ENCODE measurements at regions of chr5 and their contacts with region 1.

Region 1: GRCh38 chr5:137822158-137822764 is 45.4 kb upstream of the MYOT start:
- DNase-seq: peak; percentile 60
- H3K4me3 ChIP-seq: no peak overlapping the region
- H3K27ac ChIP-seq: no peak overlapping the region
- H3K4me1 ChIP-seq: no peaks in the 10 kb centered on the region
- H3K27me3 ChIP-seq: peaks cover 4% of the 10 kb centered on the region
- CTCF ChIP-seq: peak; percentile 61

Region 2: GRCh38 chr5:137629646-137630045 is 192.6 kb before region 1 on chr5:
- CTCF ChIA-PET with region 1: no interaction called
- POLR2A ChIA-PET with region 1: no interaction called
- intact Hi-C with region 1: loop called (anchors 5 kb)
- DNase-seq: peak; percentile 67
- H3K4me3 ChIP-seq: no peak overlapping the region
- H3K27ac ChIP-seq: no peak overlapping the region
- H3K4me1 ChIP-seq: no peaks in the 10 kb centered on the region
- H3K27me3 ChIP-seq: no peaks in the 10 kb centered on the region
- CTCF ChIP-seq: peak; percentile 87

Region 3: GRCh38 chr5:137778772-137779564 is 43.3 kb before region 1 on chr5:
- CTCF ChIA-PET with region 1: interaction called, 5 read pairs
- POLR2A ChIA-PET with region 1: no interaction called
- intact Hi-C with region 1: loop called (anchors 1 kb)
- DNase-seq: peak; percentile 60
- H3K4me3 ChIP-seq: no peak overlapping the region
- H3K27ac ChIP-seq: no peak overlapping the region
- H3K4me1 ChIP-seq: no peaks in the 10 kb centered on the region
- H3K27me3 ChIP-seq: peaks cover 3% of the 10 kb centered on the region
- CTCF ChIP-seq: peak; percentile 80

Region 4: GRCh38 chr5:138210985-138211384 is 388.7 kb after region 1 on chr5:
- CTCF ChIA-PET with region 1: no interaction called
- POLR2A ChIA-PET with region 1: no interaction called
- intact Hi-C with region 1: no loop called
- DNase-seq: no peak
- H3K4me3 ChIP-seq: no peak overlapping the region
- H3K27ac ChIP-seq: no peak overlapping the region
- H3K4me1 ChIP-seq: peaks cover 12% of the 10 kb centered on the region
- H3K27me3 ChIP-seq: no peaks in the 10 kb centered on the region
- CTCF ChIP-seq: no peak